ENCODE measurements at regions of chr1 and their contacts with region 1.

Region 1: GRCh38 chr1:66764994-66765578 is 12.8 kb downstream of the DYNLT5 start:
- DNase-seq: peak; percentile 61
- H3K4me3 Mint-ChIP-seq: no peak overlapping the region
- H3K27ac Mint-ChIP-seq: no peak overlapping the region
- H3K4me1 Mint-ChIP-seq: no peaks in the 10 kb centered on the region
- H3K27me3 Mint-ChIP-seq: no peaks in the 10 kb centered on the region
- CTCF ChIP-seq: peak; percentile 65

Region 2: GRCh38 chr1:66752000-66752592 is 13.0 kb before region 1 on chr1 and contains the start of gene DYNLT5:
- CTCF ChIA-PET with region 1: no interaction called
- intact Hi-C with region 1: no loop called
- DNase-seq: no peak
- H3K4me3 Mint-ChIP-seq: no peak within 1 kb of the TSS
- H3K27ac Mint-ChIP-seq: no peak within 1 kb of the TSS
- H3K4me1 Mint-ChIP-seq: no peaks in the 10 kb centered on the region
- H3K27me3 Mint-ChIP-seq: no peaks in the 10 kb centered on the region
- CTCF ChIP-seq: no peak
- total RNA-seq, gene DYNLT5: not detected in 2 replicates

Region 3: GRCh38 chr1:66929999-66930822 is 165.1 kb after region 1 on chr1:
- CTCF ChIA-PET with region 1: interaction called, 3 read pairs
- intact Hi-C with region 1: loop called (anchors 5 kb)
- DNase-seq: peak; percentile 98
- H3K4me3 Mint-ChIP-seq: peak overlapping the region; percentile 77
- H3K27ac Mint-ChIP-seq: peak overlapping the region; percentile 85
- H3K4me1 Mint-ChIP-seq: no peaks in the 10 kb centered on the region
- H3K27me3 Mint-ChIP-seq: no peaks in the 10 kb centered on the region
- CTCF ChIP-seq: peak; percentile 28

Region 4: GRCh38 chr1:66981679-66982078 is 216.6 kb after region 1 on chr1:
- CTCF ChIA-PET with region 1: no interaction called
- intact Hi-C with region 1: loop called (anchors 5 kb)
- DNase-seq: no peak
- H3K4me3 Mint-ChIP-seq: no peak overlapping the region
- H3K27ac Mint-ChIP-seq: no peak overlapping the region
- H3K4me1 Mint-ChIP-seq: peaks cover 14% of the 10 kb centered on the region
- H3K27me3 Mint-ChIP-seq: no peaks in the 10 kb centered on the region
- CTCF ChIP-seq: no peak

Region 5: DNA sequence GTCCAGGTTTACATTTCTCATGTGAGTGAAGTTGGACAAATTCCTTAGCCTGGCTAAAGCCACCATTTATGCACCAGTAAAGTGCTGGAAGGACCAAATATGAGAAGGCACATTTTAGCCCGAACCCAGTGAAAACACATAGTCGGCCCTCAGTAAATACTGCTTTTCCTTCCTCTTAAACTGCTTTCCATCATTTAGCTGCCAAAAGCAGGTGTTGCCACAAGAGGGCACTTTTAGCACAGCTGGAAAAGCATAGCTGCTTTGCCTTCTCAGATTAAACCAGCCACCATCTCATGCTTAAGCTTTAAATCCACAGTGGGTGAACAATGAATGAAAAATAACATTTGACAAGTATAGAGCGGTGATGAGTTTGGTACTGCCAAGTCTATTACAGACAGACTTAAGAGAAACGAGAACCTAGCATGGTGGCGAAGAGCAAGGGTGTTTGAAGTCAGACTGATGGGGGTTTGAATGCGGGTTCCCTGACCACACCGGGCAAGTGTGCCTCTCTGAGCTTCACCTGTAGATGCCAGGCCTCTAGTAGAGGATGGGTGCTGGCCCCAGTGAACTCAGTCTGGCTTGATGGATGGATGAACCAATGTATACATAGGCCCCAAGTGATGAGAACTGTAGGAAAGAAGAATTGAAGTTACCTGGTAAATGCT is 231.1 kb after region 1 on chr1:
- CTCF ChIA-PET with region 1: interaction called, 3 read pairs
- intact Hi-C with region 1: loop called (anchors 5 kb)
- DNase-seq: peak; percentile 59
- H3K4me3 Mint-ChIP-seq: no peak overlapping the region
- H3K27ac Mint-ChIP-seq: no peak overlapping the region
- H3K4me1 Mint-ChIP-seq: no peaks in the 10 kb centered on the region
- H3K27me3 Mint-ChIP-seq: no peaks in the 10 kb centered on the region
- CTCF ChIP-seq: peak; percentile 65

Region 6: GRCh38 chr1:67149179-67149770 is 384.2 kb after region 1 on chr1:
- CTCF ChIA-PET with region 1: interaction called, 27 read pairs
- intact Hi-C with region 1: loop called (anchors 1 kb)
- DNase-seq: peak; percentile 76
- H3K4me3 Mint-ChIP-seq: peak overlapping the region; percentile 16
- H3K27ac Mint-ChIP-seq: no peak overlapping the region
- H3K4me1 Mint-ChIP-seq: peaks cover 18% of the 10 kb centered on the region
- H3K27me3 Mint-ChIP-seq: peaks cover 45% of the 10 kb centered on the region
- CTCF ChIP-seq: peak; percentile 82

Region 7: GRCh38 chr1:67214420-67215174 is 449.5 kb after region 1 on chr1:
- CTCF ChIA-PET with region 1: interaction called, 11 read pairs
- intact Hi-C with region 1: loop called (anchors 1 kb)
- DNase-seq: peak; percentile 64
- H3K4me3 Mint-ChIP-seq: no peak overlapping the region
- H3K27ac Mint-ChIP-seq: no peak overlapping the region
- H3K4me1 Mint-ChIP-seq: no peaks in the 10 kb centered on the region
- H3K27me3 Mint-ChIP-seq: peaks cover 4% of the 10 kb centered on the region
- CTCF ChIP-seq: no peak

Region 8: DNA sequence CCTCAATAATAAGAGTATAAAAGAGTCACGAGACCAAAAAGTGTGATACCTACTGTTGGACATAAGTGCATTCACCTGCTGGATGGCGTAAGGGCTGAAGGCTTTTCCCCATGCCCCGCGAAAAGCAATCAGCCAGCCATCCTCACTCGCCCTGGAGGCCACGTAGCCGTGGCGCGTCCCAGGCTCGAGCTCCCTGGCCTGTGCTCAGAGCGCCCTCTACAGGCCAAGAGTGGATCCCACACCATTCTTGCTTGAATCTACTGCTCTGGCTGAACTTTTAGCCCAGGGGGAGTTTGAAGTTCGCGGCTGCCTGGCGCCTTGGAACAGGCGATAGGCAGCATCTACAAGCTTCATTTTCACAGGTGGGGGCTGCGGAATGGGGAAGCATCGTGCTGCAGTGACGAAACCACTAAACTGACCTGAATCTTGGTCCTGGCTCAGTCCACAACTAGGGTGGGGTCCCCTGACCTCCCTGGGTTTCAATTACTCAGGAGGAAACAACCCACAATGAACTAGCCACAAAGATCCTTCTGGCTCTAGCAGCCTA is 735.4 kb after region 1 on chr1:
- CTCF ChIA-PET with region 1: no interaction called
- intact Hi-C with region 1: loop called (anchors 5 kb)
- DNase-seq: peak; percentile 87
- H3K4me3 Mint-ChIP-seq: peak overlapping the region; percentile 36
- H3K27ac Mint-ChIP-seq: no peak overlapping the region
- H3K4me1 Mint-ChIP-seq: no peaks in the 10 kb centered on the region
- H3K27me3 Mint-ChIP-seq: peaks cover 20% of the 10 kb centered on the region
- CTCF ChIP-seq: peak; percentile 89